ENCODE measurements at regions of chr18 and their contacts with region 1.

Region 1: GRCh38 chr18:27363872-27364271 is 178.8 kb upstream of the CHST9 start:
- DNase-seq: no peak

Region 2: GRCh38 chr18:27206411-27206810 is 157.5 kb before region 1 on chr18:
- intact Hi-C with region 1: no loop called
- DNase-seq: no peak

Region 3: GRCh38 chr18:27605107-27605834 is 241.4 kb after region 1 on chr18:
- intact Hi-C with region 1: loop called (anchors 5 kb)
- DNase-seq: no peak

Measured in cardiac septum (tissue), 1 donor.